GM12878 (cell line): ENCODE measurements at regions of chr2 and their contacts with region 1.

Region 1: DNA sequence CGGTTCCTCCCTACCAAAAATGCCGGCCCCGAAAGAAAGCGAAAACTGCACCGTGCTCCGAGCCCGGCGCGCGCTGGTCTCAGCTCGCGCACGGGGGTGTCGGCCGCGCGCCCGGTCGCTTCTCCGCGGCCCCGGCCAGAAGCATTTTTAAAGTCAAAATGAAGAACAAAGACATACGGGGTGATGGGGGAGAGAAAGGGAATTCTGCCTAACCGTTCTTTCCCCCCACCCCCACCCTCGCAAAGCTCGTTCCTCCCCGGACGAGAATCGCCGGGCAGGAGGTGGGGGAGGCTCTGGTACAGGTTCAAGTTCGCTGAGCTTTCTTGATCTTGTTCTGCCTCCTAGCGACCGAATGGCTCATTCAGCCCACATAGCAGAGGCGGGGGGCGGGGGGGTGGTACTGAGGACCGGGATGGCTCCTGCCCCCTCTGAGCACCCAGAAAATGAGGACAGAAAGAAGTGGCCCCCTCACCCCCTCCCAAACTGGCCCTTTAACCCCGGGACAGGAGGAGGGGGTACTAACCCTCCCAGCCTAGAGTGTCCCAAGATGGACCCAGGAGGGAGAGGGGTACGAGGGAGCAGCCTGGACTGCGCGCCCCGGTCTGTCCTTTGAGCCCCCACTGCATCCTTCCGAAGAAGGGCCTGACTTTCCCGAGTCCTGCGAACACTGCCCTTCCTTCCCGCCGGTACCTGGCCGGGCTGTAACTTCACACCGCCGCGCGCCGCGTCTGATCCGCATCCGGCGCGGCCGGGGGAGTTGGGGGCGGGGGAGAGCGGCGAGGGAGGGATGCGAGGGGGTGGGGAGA is 3.1 kb downstream of the BCL11A start:
- DNase-seq: no peak
- ATAC-seq: peak; percentile 80
- H3K4me3 ChIP-seq: peak overlapping the region; percentile 81
- H3K27ac ChIP-seq: peak overlapping the region; percentile 89
- H3K4me1 ChIP-seq: peaks cover 15% of the 10 kb centered on the region
- H3K27me3 ChIP-seq: peaks cover 0 to 3% of the 10 kb centered on the region in 2 experiments; a peak in 2 of 4 replicates
- CTCF ChIP-seq: peak; percentile 77 to 92 (median 78)
- EP300 ChIP-seq: no peak
- POLR2A ChIP-seq: peak; percentile 44; the same call in 1 of the 2 replicates
- RAD21 ChIP-seq: peak; percentile 97

Region 2: DNA sequence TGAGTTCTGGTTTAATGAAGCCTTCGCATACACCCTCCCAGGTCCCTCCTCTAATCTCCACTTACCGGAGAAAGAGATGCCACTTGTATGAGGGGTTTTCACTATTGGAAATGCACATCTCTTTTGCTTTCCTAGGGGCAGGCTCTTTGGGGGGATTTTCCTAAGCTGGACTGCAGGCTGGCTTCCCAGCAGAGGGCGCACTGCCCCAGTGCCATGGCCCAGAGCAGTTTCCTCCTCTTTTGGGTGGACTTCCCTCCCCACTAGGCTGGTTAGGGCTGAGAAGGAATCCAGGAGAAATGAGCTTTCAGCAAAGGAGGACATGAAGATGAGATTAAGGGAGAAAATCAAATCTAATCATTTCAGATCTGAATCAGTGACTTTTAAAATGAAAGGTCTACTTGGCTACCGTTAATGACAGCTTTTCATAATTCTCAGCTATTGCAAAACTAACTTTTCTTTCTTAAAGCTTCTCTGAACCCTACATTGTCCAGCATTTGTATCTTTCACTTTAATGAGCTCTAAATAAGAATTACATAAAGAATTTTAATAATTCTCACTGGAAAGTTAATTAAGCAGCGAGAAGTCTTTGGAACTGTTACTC is 1525.1 kb before region 1 on chr2:
- CTCF ChIA-PET with region 1: interaction called, 19 read pairs
- POLR2A ChIA-PET with region 1: no interaction called
- RAD21 ChIA-PET with region 1: interaction called, 15 read pairs
- SMC1A ChIA-PET with region 1: interaction called, 7 read pairs
- in situ Hi-C with region 1: no loop called
- intact Hi-C with region 1: loop called (anchors 10 kb)
- DNase-seq: no peak
- ATAC-seq: peak; percentile 90
- H3K4me3 ChIP-seq: no peak overlapping the region
- H3K27ac ChIP-seq: no peak overlapping the region
- H3K4me1 ChIP-seq: no peaks in the 10 kb centered on the region
- H3K27me3 ChIP-seq: 0 out of 4 replicates have a peak, but pooled peaks cover 0 to 2% of the 10 kb centered on the region in 2 experiments
- CTCF ChIP-seq: peak; percentile 75 to 96 (median 94)
- EP300 ChIP-seq: no peak
- POLR2A ChIP-seq: no peak
- RAD21 ChIP-seq: peak; percentile 70

Region 3: DNA sequence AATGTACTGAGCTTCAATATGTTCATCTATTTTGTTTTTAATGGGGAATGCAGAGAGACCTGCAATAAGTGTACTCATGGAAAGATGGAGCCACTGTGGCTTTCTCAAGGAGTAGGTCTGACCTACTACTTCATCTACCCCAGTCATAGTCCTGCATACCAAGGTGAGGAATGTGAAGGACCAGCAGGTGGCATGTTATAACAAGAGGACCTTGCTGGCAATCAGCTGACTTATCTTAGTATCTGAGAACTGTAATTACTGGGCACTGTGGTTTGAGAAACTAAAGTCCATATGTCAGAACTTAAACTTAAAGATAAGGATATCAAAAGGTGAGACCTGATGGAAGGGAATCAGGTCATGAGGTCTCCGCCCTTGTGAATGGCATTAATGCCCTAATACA is 1101.1 kb before region 1 on chr2:
- CTCF ChIA-PET with region 1: no interaction called
- POLR2A ChIA-PET with region 1: no interaction called
- RAD21 ChIA-PET with region 1: no interaction called
- SMC1A ChIA-PET with region 1: no interaction called
- in situ Hi-C with region 1: no loop called
- intact Hi-C with region 1: loop called (anchors 10 kb)
- DNase-seq: no peak
- ATAC-seq: no peak
- H3K4me3 ChIP-seq: no peak overlapping the region
- H3K27ac ChIP-seq: no peak overlapping the region
- H3K4me1 ChIP-seq: no peaks in the 10 kb centered on the region
- H3K27me3 ChIP-seq: no peaks in the 10 kb centered on the region
- CTCF ChIP-seq: no peak; a peak in 2 of 6 replicates
- EP300 ChIP-seq: no peak
- POLR2A ChIP-seq: no peak
- RAD21 ChIP-seq: peak; percentile 27; the same call in 1 of the 2 replicates

Region 4: GRCh38 chr2:60152226-60152833 is 398.1 kb before region 1 on chr2:
- CTCF ChIA-PET with region 1: interaction called, 6 read pairs
- POLR2A ChIA-PET with region 1: no interaction called
- RAD21 ChIA-PET with region 1: interaction called, 3 read pairs
- SMC1A ChIA-PET with region 1: no interaction called
- in situ Hi-C with region 1: no loop called
- intact Hi-C with region 1: loop called (anchors 5 kb)
- DNase-seq: no peak
- ATAC-seq: peak; percentile 55; the same call in 2 of the 3 replicates
- H3K4me3 ChIP-seq: no peak overlapping the region
- H3K27ac ChIP-seq: no peak overlapping the region
- H3K4me1 ChIP-seq: peaks cover 9% of the 10 kb centered on the region
- H3K27me3 ChIP-seq: no peaks in the 10 kb centered on the region
- CTCF ChIP-seq: peak; percentile 48 to 87 (median 75)
- EP300 ChIP-seq: no peak
- POLR2A ChIP-seq: no peak
- RAD21 ChIP-seq: peak; percentile 60

Region 5: GRCh38 chr2:60353406-60353800 is 197.0 kb before region 1 on chr2:
- CTCF ChIA-PET with region 1: interaction called, 3 read pairs
- POLR2A ChIA-PET with region 1: no interaction called
- RAD21 ChIA-PET with region 1: interaction called, 3 read pairs
- SMC1A ChIA-PET with region 1: no interaction called
- in situ Hi-C with region 1: no loop called
- intact Hi-C with region 1: loop called (anchors 5 kb)
- DNase-seq: no peak
- ATAC-seq: peak; percentile 15
- H3K4me3 ChIP-seq: peak overlapping the region; percentile 30; the same call in 1 of the 2 replicates
- H3K27ac ChIP-seq: peak overlapping the region; percentile 99
- H3K4me1 ChIP-seq: peaks cover 75% of the 10 kb centered on the region
- H3K27me3 ChIP-seq: no peaks in the 10 kb centered on the region
- CTCF ChIP-seq: 0 out of 6 replicates have a peak, but pooled peaks of 1 of the 3 experiments have one; percentile 16
- EP300 ChIP-seq: no peak
- POLR2A ChIP-seq: peak; percentile 19; the same call in 1 of the 2 replicates
- RAD21 ChIP-seq: peak; percentile 25; the same call in 1 of the 2 replicates

Region 6: GRCh38 chr2:60446413-60447267 is 103.7 kb before region 1 on chr2:
- CTCF ChIA-PET with region 1: no interaction called
- POLR2A ChIA-PET with region 1: no interaction called
- RAD21 ChIA-PET with region 1: no interaction called
- SMC1A ChIA-PET with region 1: no interaction called
- in situ Hi-C with region 1: no loop called
- intact Hi-C with region 1: loop called (anchors 2 kb)
- DNase-seq: peak; percentile 86
- ATAC-seq: peak; percentile 91
- H3K4me3 ChIP-seq: peak overlapping the region; percentile 21; the same call in 1 of the 2 replicates
- H3K27ac ChIP-seq: peak overlapping the region; percentile 94
- H3K4me1 ChIP-seq: peaks cover 54% of the 10 kb centered on the region
- H3K27me3 ChIP-seq: no peaks in the 10 kb centered on the region
- CTCF ChIP-seq: no peak
- EP300 ChIP-seq: peak in 1 of 2 experiments; percentile 38; a peak in 1 of 4 replicates
- POLR2A ChIP-seq: 0 out of 2 replicates have a peak, but pooled peaks have one; percentile 17
- RAD21 ChIP-seq: no peak

Region 7: GRCh38 chr2:60535685-60536312 is 14.6 kb before region 1 on chr2:
- CTCF ChIA-PET with region 1: interaction called, 4 read pairs
- POLR2A ChIA-PET with region 1: no interaction called
- RAD21 ChIA-PET with region 1: no interaction called
- SMC1A ChIA-PET with region 1: interaction called, 10 read pairs
- in situ Hi-C with region 1: no loop called
- intact Hi-C with region 1: no loop called
- DNase-seq: no peak
- ATAC-seq: peak; percentile 76
- H3K4me3 ChIP-seq: peak overlapping the region; percentile 45
- H3K27ac ChIP-seq: peak overlapping the region; percentile 49
- H3K4me1 ChIP-seq: peaks cover 13% of the 10 kb centered on the region
- H3K27me3 ChIP-seq: peaks cover 0 to 3% of the 10 kb centered on the region in 2 experiments; a peak in 2 of 4 replicates
- CTCF ChIP-seq: no peak
- EP300 ChIP-seq: no peak
- POLR2A ChIP-seq: no peak
- RAD21 ChIP-seq: no peak